ENCODE measurements at regions of chr2 and their contacts with region 1.

Region 1: GRCh38 chr2:189412330-189412953 is 28.8 kb upstream of the WDR75 start:
- DNase-seq: peak; percentile 24
- ATAC-seq: peak; percentile 69
- H3K4me3 ChIP-seq: no peak overlapping the region
- H3K27ac ChIP-seq: no peak overlapping the region
- H3K4me1 ChIP-seq: no peaks in the 10 kb centered on the region
- H3K27me3 ChIP-seq: no peaks in the 10 kb centered on the region
- CTCF ChIP-seq: peak; percentile 48 to 80 (median 77); a peak in 5 of 6 replicates
- POLR2A ChIP-seq: no peak
- RAD21 ChIP-seq: peak; percentile 84

Region 2: DNA sequence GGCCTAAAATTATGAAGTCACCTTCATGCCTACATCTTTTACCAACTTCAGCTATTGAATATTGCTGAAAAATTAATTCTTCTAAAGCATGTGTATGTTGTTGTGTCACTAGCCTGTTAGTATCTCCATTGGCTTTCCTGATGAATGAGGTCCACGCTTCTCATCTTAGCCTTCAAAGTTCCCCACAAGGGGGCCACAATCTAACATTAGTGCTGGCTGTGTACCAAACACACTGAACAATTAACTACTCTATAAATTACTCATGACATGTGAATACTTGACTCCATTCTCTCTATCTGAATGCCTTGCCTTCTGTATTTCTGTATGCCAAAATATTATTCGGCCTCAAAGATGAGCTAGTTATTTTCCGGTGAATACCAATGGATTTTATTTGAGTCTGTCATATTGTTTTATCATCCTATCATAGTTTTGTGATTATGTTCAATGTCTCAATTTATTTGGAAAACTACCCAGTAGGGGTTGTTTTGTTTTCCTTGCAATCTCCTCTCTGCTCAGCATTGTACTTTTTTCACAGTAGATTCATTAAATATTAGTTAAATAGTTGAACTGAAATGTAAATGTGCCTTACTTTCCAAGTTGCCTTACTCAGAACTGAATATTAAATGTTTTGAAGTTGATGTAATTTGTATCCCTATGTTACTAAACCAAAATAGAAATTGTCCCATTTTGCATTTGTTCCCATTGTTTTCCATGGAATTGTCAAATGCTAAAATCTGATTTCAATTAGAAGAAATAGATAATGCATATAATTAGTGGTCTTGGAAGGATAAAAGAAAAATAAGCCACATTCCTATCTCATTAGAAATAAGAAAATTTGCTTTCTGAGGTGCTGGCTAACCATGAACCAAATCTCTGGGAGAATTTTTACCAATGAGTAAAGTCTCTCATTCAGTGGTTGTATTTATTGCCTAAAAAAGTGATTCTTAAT is 646.6 kb before region 1 on chr2:
- CTCF ChIA-PET with region 1: no interaction called
- POLR2A ChIA-PET with region 1: no interaction called
- RAD21 ChIA-PET with region 1: no interaction called
- intact Hi-C with region 1: loop called (anchors 10 kb)
- DNase-seq: peak; percentile 41
- ATAC-seq: peak; percentile 63
- H3K4me3 ChIP-seq: no peak overlapping the region
- H3K27ac ChIP-seq: no peak overlapping the region
- H3K4me1 ChIP-seq: no peaks in the 10 kb centered on the region
- H3K27me3 ChIP-seq: no peaks in the 10 kb centered on the region
- CTCF ChIP-seq: peak; percentile 40 to 61 (median 55); a peak in 5 of 6 replicates
- POLR2A ChIP-seq: no peak
- RAD21 ChIP-seq: peak; percentile 58

Region 3: DNA sequence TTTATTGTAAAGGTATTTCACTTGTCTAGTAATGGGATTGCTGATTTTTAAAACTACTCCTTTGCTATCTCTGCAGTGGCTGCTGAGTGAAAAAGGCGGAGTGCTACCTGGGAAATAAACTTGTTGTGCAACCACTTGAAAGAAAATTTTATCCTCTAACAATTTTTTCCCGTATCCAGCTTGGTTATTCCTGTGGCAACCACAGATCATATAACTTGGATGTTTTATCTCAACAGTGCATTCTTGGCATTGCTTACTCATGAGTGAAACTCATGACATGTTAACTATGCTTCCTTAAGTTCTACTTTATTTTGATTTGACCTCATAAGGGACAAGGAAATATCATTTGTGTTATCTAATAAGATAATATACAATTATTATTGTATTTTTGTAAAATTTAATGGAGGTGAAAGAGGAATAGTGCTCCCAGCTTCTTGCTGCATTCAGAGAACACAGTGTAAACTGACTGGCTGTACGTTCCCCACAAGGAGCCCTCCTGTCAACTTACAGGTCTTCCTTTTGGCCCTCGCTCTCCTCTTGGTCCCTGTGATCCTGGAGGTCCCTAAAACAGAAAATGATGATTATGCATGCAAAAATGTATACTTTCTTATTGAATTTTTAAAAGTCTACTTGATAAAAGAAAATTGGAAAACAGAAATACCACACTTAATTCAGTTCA is 315.5 kb before region 1 on chr2:
- CTCF ChIA-PET with region 1: interaction called, 4 read pairs
- POLR2A ChIA-PET with region 1: no interaction called
- RAD21 ChIA-PET with region 1: no interaction called
- intact Hi-C with region 1: loop called (anchors 1 kb)
- DNase-seq: peak; percentile 21
- ATAC-seq: peak; percentile 79
- H3K4me3 ChIP-seq: no peak overlapping the region
- H3K27ac ChIP-seq: no peak overlapping the region
- H3K4me1 ChIP-seq: peaks cover 9 to 14% of the 10 kb centered on the region in 2 experiments; a peak in 3 of 4 replicates
- H3K27me3 ChIP-seq: no peaks in the 10 kb centered on the region
- CTCF ChIP-seq: no peak
- POLR2A ChIP-seq: no peak
- RAD21 ChIP-seq: no peak

Region 4: DNA sequence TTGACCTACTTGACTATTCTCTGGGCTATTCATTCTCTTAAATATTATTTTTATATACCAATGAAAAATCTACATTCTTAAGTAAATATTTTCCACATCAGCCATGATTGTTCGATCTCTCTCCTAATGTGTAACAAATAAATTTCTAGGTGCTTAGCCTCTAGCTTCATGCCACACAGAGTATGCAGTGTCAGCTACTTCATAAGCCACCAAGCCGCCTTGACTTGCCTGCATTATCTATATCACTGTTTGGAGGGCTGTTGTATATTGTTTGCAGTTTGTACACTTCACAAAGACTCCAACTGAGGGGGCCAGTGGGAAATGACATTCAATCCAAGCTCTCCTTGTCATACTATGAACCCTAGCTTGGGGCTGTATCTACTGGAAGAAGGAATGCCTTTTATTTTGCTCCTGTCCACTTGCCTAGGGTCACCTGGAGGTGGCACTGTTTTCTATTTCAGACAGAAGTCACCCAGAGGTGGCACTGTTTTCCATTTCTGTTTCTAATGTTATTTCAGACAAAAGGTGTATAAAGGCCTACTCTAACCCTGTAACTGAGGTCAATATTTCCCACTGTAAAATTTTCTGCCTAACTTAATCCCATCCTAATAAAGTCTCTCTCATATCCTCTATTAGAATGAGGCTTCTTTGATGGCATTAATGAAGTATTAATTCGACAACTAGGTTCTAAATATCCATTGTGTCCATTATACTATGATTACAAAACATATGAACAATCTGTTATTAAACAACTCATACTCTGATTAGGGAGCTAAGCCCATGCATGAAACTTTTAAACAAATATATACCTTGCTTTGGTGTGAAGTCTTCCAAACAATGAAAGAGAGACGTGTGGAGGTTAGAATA is 269.3 kb before region 1 on chr2:
- CTCF ChIA-PET with region 1: interaction called, 9 read pairs
- POLR2A ChIA-PET with region 1: no interaction called
- RAD21 ChIA-PET with region 1: no interaction called
- intact Hi-C with region 1: loop called (anchors 1 kb)
- DNase-seq: peak; percentile 62
- ATAC-seq: peak; percentile 99
- H3K4me3 ChIP-seq: no peak overlapping the region
- H3K27ac ChIP-seq: no peak overlapping the region
- H3K4me1 ChIP-seq: no peaks in the 10 kb centered on the region
- H3K27me3 ChIP-seq: no peaks in the 10 kb centered on the region
- CTCF ChIP-seq: peak; percentile 96 to 99 (median 99)
- POLR2A ChIP-seq: no peak
- RAD21 ChIP-seq: peak; percentile 71

Region 5: GRCh38 chr2:189534854-189535832 is 122.7 kb after region 1 on chr2:
- CTCF ChIA-PET with region 1: no interaction called
- POLR2A ChIA-PET with region 1: no interaction called
- RAD21 ChIA-PET with region 1: no interaction called
- intact Hi-C with region 1: no loop called
- DNase-seq: no peak
- ATAC-seq: no peak
- H3K4me3 ChIP-seq: no peak overlapping the region
- H3K27ac ChIP-seq: no peak overlapping the region
- H3K4me1 ChIP-seq: no peaks in the 10 kb centered on the region
- H3K27me3 ChIP-seq: no peaks in the 10 kb centered on the region
- CTCF ChIP-seq: no peak
- POLR2A ChIP-seq: no peak
- RAD21 ChIP-seq: no peak